ENCODE measurements at regions of chr12 and their contacts with region 1.

Region 1: GRCh38 chr12:56041552-56042429 is at the start of gene RPS26:
- DNase-seq: peak; percentile 90
- H3K4me3 Mint-ChIP-seq: peak within 1 kb of the TSS; percentile 97
- H3K27ac Mint-ChIP-seq: peak within 1 kb of the TSS; percentile 97
- H3K4me1 Mint-ChIP-seq: peaks cover 49% of the 10 kb centered on the region
- H3K27me3 Mint-ChIP-seq: no peaks in the 10 kb centered on the region
- total RNA-seq, gene RPS26: 35.4 and 38.2 TPM in 2 replicates

Region 2: DNA sequence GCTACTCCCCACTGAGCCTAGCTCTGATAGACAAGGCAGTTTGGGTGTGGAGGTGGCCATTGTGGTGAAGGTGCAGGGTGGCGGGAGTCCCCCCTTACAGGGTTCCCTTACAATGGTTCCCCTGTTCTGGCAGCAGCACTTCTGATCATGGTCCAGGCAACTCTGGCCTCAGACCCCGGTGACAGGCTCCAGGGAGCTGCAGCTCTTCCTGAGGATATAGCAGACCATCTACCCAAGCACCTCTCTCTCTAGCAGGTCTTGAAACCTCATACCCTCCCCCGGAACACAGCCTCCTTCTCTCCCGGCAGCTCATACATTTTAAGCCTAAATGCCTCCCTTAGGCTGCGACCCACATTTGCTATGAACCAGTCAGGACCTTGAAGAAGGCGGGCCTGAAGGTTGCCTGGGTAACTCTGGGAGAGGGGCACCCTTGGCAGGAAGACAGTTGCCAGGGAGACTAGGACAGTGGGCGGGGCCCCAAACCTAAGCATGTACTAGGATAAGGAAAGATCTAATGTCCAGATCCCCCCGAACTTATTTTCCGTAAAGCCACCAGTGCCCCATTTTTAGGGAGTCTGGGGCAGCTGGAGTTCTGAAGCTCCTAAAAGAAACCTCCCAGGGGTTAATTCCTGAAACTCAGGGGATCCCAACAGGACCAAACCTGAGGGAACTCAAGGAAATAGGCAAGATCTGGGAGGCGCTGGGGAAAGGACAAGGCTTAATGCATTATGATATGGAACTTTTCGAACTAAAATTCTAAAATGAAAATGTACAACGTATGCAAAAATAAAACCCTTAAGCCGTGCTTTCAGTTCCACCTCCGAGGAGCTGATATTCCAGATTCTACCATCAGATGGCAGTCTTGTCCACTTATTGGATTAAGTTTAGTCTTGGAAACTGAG is 303.4 kb before region 1 on chr12:
- intact Hi-C with region 1: loop called (anchors 1 kb)
- DNase-seq: peak; percentile 73
- H3K4me3 Mint-ChIP-seq: peak overlapping the region; percentile 79
- H3K27ac Mint-ChIP-seq: peak overlapping the region; percentile 73
- H3K4me1 Mint-ChIP-seq: peaks cover 44% of the 10 kb centered on the region
- H3K27me3 Mint-ChIP-seq: peaks cover 3% of the 10 kb centered on the region

Region 3: GRCh38 chr12:55829967-55830600 is 211.7 kb before region 1 on chr12:
- intact Hi-C with region 1: loop called (anchors 1 kb)
- DNase-seq: peak; percentile 22
- H3K4me3 Mint-ChIP-seq: peak overlapping the region; percentile 98
- H3K27ac Mint-ChIP-seq: peak overlapping the region; percentile 92
- H3K4me1 Mint-ChIP-seq: peaks cover 37% of the 10 kb centered on the region
- H3K27me3 Mint-ChIP-seq: no peaks in the 10 kb centered on the region

Region 4: DNA sequence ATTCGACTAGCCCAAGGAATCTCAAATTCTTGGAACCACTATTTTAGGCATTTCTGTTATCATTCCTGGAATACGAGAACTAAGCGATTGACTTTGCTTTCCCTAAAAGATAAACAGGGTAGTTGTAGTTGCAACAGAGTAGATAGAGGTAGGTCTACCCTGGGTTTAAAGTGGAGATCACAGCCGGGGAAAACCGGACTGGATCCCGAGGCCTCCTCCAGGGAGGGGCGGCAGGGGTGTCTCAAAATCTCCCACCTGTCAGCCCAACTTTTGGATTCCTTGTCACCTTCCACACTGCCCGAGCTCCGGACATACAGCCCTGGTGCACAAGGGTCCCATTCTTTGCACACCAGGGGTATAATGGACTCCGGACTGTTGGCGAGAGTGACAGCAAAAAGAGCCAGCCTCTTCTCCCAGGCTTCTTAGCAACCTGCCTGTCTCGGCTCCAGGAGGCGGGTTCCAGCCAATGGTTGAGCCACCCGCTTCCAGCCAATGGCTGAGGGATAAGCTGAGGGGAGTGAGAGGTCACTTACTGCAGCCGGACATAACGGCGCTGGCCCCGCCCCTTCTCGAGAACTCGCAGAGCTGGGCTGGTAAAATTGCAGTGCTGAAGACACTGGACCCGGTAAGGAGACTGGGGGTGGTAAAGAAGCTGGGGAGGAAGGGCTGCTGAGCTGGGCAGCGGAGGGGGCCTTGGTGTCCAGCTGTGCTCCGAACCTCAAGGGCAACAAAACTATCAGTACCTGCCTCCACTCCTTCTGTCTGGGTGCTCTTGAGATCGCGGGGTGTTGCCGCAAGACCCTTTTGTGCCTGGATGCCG is 44.9 kb before region 1 on chr12 and contains the start of gene SUOX:
- intact Hi-C with region 1: loop called (anchors 1 kb)
- DNase-seq: peak; percentile 50
- H3K4me3 Mint-ChIP-seq: peak within 1 kb of the TSS; percentile 88
- H3K27ac Mint-ChIP-seq: peak within 1 kb of the TSS; percentile 64
- H3K4me1 Mint-ChIP-seq: peaks cover 30% of the 10 kb centered on the region
- H3K27me3 Mint-ChIP-seq: no peaks in the 10 kb centered on the region
- total RNA-seq, gene SUOX: 12.0 and 12.9 TPM in 2 replicates

Region 5: GRCh38 chr12:56020423-56021184 is 21.2 kb before region 1 on chr12 and contains the start of gene IKZF4:
- intact Hi-C with region 1: loop called (anchors 1 kb)
- DNase-seq: no peak
- H3K4me3 Mint-ChIP-seq: peak within 1 kb of the TSS; percentile 97
- H3K27ac Mint-ChIP-seq: peak within 1 kb of the TSS; percentile 98
- H3K4me1 Mint-ChIP-seq: peaks cover 45% of the 10 kb centered on the region
- H3K27me3 Mint-ChIP-seq: no peaks in the 10 kb centered on the region
- total RNA-seq, gene IKZF4: 31.9 and 35.7 TPM in 2 replicates

Region 6: DNA sequence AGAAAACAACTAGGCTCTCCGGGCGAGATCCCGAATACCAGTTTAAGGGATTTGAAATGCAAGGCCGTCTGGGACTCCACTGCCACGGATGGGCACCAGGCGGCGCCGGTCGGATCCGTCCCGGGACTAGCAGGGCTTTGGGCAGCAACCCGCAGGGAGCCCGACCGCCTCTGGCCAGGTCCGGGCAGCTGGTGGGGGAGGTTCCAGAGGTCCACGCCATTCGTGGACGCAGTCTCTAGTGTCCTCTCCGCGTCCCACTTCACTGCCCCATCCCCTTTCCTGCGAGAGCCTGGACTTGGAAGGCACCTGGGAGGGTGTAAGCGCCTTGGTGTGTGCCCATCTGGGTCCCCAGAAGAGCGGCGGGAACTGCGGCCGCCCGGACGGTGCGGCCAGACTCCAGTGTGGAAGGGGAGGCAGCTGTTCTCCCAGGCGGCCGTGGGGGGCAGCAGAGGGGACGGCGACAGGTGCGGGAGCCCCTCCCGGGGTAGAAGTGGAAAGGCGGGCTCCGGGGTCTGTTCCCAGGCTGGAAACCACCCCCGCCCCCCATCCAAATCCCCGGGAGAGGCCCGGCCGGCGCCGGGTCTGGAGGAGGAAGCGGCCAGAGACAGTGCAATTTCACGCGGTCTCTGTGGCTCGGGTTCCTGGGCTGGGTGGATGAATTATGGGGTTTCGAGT is 37.3 kb after region 1 on chr12:
- intact Hi-C with region 1: no loop called
- DNase-seq: peak; percentile 25
- H3K4me3 Mint-ChIP-seq: peak overlapping the region; percentile 80
- H3K27ac Mint-ChIP-seq: no peak overlapping the region
- H3K4me1 Mint-ChIP-seq: peaks cover 13% of the 10 kb centered on the region
- H3K27me3 Mint-ChIP-seq: peaks cover 25% of the 10 kb centered on the region

Region 7: GRCh38 chr12:56104109-56104814 is 62.5 kb after region 1 on chr12 and contains the start of gene PA2G4:
- intact Hi-C with region 1: loop called (anchors 1 kb)
- DNase-seq: peak; percentile 99
- H3K4me3 Mint-ChIP-seq: peak within 1 kb of the TSS; percentile 98
- H3K27ac Mint-ChIP-seq: peak within 1 kb of the TSS; percentile 89
- H3K4me1 Mint-ChIP-seq: peaks cover 49% of the 10 kb centered on the region
- H3K27me3 Mint-ChIP-seq: no peaks in the 10 kb centered on the region
- total RNA-seq, gene PA2G4: 404 and 419 TPM in 2 replicates

Region 8: GRCh38 chr12:56158029-56158925 is 116.5 kb after region 1 on chr12 and contains the start of gene MYL6:
- intact Hi-C with region 1: loop called (anchors 2 kb)
- DNase-seq: peak; percentile 90
- H3K4me3 Mint-ChIP-seq: peak within 1 kb of the TSS; percentile 97
- H3K27ac Mint-ChIP-seq: peak within 1 kb of the TSS; percentile 93
- H3K4me1 Mint-ChIP-seq: peaks cover 49% of the 10 kb centered on the region
- H3K27me3 Mint-ChIP-seq: no peaks in the 10 kb centered on the region
- total RNA-seq, gene MYL6: 786 and 802 TPM in 2 replicates

Measured in activated T-helper 1 cell treated with anti-CD3 and anti-CD28 coated beads, Interleukin-12 subunit alpha, Interleukin-12 subunit beta, Interleukin-2, Interleukin-4 antibody, amounts not matched to agents 30 ng/mL and 10 ng/mL and 1 ng/mL, durations not matched to agents 14 hours and 24 hours and 36 hours (primary cell).